ENCODE measurements at regions of chr9 and their contacts with region 1.

Region 1: GRCh38 chr9:128117613-128118471 is 9.7 kb downstream of the PTGES2 start:
- DNase-seq: peak; percentile 91 to 98 (median 98)
- H3K4me3 ChIP-seq: no peak overlapping the region
- H3K27ac ChIP-seq: no peak overlapping the region
- H3K4me1 ChIP-seq: peaks cover 4% of the 10 kb centered on the region
- H3K27me3 ChIP-seq: no peaks in the 10 kb centered on the region
- CTCF ChIP-seq: peak; percentile 100
- EP300 ChIP-seq: no peak
- POLR2A ChIP-seq: peak; percentile 45

Region 2: GRCh38 chr9:128043467-128043868 is 74.4 kb before region 1 on chr9:
- intact Hi-C with region 1: loop called in 1 of 4 experiments (anchors 10 kb)
- DNase-seq: peak in 4 of 5 donors; percentile 56 to 81 (median 68)
- H3K4me3 ChIP-seq: no peak overlapping the region
- H3K27ac ChIP-seq: peak overlapping the region; percentile 40 to 55
- H3K4me1 ChIP-seq: peaks cover 27% of the 10 kb centered on the region
- H3K27me3 ChIP-seq: no peaks in the 10 kb centered on the region
- CTCF ChIP-seq: no peak
- EP300 ChIP-seq: no peak
- POLR2A ChIP-seq: no peak

Region 3: DNA sequence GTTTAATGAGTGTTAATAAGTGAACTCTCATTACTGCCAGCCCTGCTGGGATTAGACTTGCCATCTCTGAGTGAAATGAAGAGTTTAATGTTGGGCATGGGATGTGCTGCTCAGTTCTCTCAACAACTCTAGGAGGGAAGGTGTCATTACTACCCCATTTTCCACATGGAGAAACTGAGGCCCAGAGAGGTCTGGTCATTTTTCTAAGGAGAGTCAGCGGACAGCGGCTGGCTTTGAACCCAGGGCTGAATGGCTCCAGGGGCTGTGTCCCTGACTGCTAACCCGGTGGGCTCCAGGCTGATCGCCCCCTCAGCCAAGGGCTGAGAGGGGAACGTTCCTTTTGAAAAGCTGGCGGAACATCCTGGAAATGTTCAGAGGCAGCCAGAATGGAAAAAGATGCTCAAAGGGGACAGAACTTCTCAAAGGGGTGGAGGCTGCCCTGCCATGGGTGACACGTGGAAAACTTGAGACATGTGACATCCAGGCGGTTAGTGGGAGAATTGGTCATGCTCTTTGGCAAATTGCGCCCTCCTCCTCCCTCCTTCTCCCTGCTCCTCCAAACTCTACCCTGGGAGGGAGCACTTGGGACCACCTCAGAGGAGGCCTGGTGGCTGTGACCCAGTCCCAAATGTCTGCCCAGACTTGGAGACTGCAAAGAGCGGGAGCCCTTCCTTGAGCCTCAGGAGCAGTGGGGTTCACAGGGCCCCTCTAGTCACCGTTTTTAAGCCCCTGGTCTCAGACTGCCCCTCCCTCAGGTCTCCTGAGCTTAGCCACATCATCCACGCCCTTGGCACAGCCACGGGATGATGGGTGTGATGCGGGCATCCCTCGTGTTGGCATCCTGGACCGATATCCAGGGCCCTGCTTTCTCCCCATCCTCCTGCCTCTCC is 114.0 kb after region 1 on chr9:
- intact Hi-C with region 1: no loop called
- DNase-seq: no peak
- H3K4me3 ChIP-seq: no peak overlapping the region
- H3K27ac ChIP-seq: no peak overlapping the region
- H3K4me1 ChIP-seq: no peaks in the 10 kb centered on the region
- H3K27me3 ChIP-seq: no peaks in the 10 kb centered on the region
- CTCF ChIP-seq: no peak
- EP300 ChIP-seq: no peak
- POLR2A ChIP-seq: no peak